Endothelial cell of umbilical vein (primary cell): ENCODE measurements at regions of chr19 and their contacts with region 1.

Region 1: GRCh38 chr19:680287-681028 is 4.3 kb downstream of the FSTL3 start:
- DNase-seq: peak; percentile 99
- H3K4me3 ChIP-seq: peak overlapping the region; percentile 31 to 55 (median 49)
- H3K27ac ChIP-seq: peak overlapping the region; percentile 77
- H3K4me1 ChIP-seq: peaks cover 16% of the 10 kb centered on the region
- H3K27me3 ChIP-seq: no peaks in the 10 kb centered on the region
- CTCF ChIP-seq: peak; percentile 33 to 52
- POLR2A ChIP-seq: no peak

Region 2: GRCh38 chr19:662962-663681 is 17.3 kb before region 1 on chr19 and contains the start of gene RNF126:
- CTCF ChIA-PET with region 1: interaction called, 4 read pairs
- POLR2A ChIA-PET with region 1: interaction called, 3 read pairs
- dilution Hi-C with region 1: no loop called
- intact Hi-C with region 1: loop called (anchors 1 kb)
- DNase-seq: peak; percentile 89
- H3K4me3 ChIP-seq: peak within 1 kb of the TSS; percentile 73 to 89 (median 86)
- H3K27ac ChIP-seq: peak within 1 kb of the TSS; percentile 60
- H3K4me1 ChIP-seq: peaks cover 19% of the 10 kb centered on the region
- H3K27me3 ChIP-seq: no peaks in the 10 kb centered on the region
- CTCF ChIP-seq: no peak
- POLR2A ChIP-seq: peak; percentile 88
- total RNA-seq, gene RNF126: 58.4 and 61.3 TPM in 2 replicates

Region 3: GRCh38 chr19:703651-704446 is 23.4 kb after region 1 on chr19:
- CTCF ChIA-PET with region 1: interaction called, 6 read pairs
- POLR2A ChIA-PET with region 1: no interaction called
- dilution Hi-C with region 1: no loop called
- intact Hi-C with region 1: loop called (anchors 1 kb)
- DNase-seq: peak; percentile 22
- H3K4me3 ChIP-seq: no peak overlapping the region
- H3K27ac ChIP-seq: no peak overlapping the region
- H3K4me1 ChIP-seq: peaks cover 3% of the 10 kb centered on the region
- H3K27me3 ChIP-seq: peaks cover 0 to 3% of the 10 kb centered on the region in 2 experiments
- CTCF ChIP-seq: no peak
- POLR2A ChIP-seq: no peak

Region 4: GRCh38 chr19:728011-728410 is 47.6 kb after region 1 on chr19:
- CTCF ChIA-PET with region 1: interaction called, 9 read pairs
- POLR2A ChIA-PET with region 1: no interaction called
- dilution Hi-C with region 1: no loop called
- intact Hi-C with region 1: loop called (anchors 1 kb)
- DNase-seq: peak; percentile 66
- H3K4me3 ChIP-seq: no peak overlapping the region
- H3K27ac ChIP-seq: peak overlapping the region; percentile 79
- H3K4me1 ChIP-seq: peaks cover 8% of the 10 kb centered on the region
- H3K27me3 ChIP-seq: no peaks in the 10 kb centered on the region
- CTCF ChIP-seq: no peak
- POLR2A ChIP-seq: no peak

Region 5: DNA sequence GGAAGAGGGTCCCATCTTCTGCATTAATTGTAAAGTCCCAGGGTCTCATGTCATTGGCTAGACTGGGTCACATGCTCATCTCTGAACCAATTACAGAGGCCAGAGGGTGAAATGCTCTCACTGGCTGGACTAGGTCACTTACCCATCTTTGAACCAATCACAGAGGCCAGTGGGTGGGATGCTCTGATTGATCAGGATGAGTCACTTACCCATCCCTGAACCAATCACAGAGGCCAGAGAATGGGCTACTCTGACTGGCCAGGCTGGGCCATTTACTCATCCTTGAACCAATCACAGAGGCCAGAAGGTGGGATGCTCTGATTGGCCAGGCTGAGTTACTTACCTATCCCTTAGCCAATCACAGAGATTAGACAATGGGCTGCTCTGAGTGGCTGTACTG is 75.8 kb after region 1 on chr19:
- CTCF ChIA-PET with region 1: no interaction called
- POLR2A ChIA-PET with region 1: no interaction called
- dilution Hi-C with region 1: no loop called
- intact Hi-C with region 1: no loop called
- DNase-seq: peak; percentile 35
- H3K4me3 ChIP-seq: no peak overlapping the region
- H3K27ac ChIP-seq: no peak overlapping the region
- H3K4me1 ChIP-seq: no peaks in the 10 kb centered on the region
- H3K27me3 ChIP-seq: no peaks in the 10 kb centered on the region
- CTCF ChIP-seq: no peak
- POLR2A ChIP-seq: no peak